A549 (cell line): ENCODE measurements at regions of chr10 and their contacts with region 1.

Region 1: GRCh38 chr10:70903262-70903921 is 15.0 kb upstream of the PCBD1 start:
- DNase-seq: peak; percentile 59 to 62
- ATAC-seq: peak; percentile 51 to 77
- H3K4me3 ChIP-seq: no peak overlapping the region
- H3K27ac ChIP-seq: no peak overlapping the region
- H3K4me1 ChIP-seq: 0 out of 3 replicates have a peak, but pooled peaks cover 3% of the 10 kb centered on the region
- CTCF ChIP-seq: peak; percentile 75
- EP300 ChIP-seq: no peak
- POLR2A ChIP-seq: no peak
- RAD21 ChIP-seq: peak; percentile 83 to 93

Region 2: GRCh38 chr10:70887804-70888800 is 15.3 kb before region 1 on chr10 and contains the start of gene PCBD1:
- CTCF ChIA-PET with region 1: interaction called, 31 read pairs
- POLR2A ChIA-PET with region 1: no interaction called
- DNase-seq: peak; percentile 77 to 81
- ATAC-seq: peak; percentile 92 to 93
- H3K4me3 ChIP-seq: peak within 1 kb of the TSS; percentile 87
- H3K27ac ChIP-seq: peak within 1 kb of the TSS; percentile 94 to 98
- H3K4me1 ChIP-seq: peaks cover 20% of the 10 kb centered on the region
- CTCF ChIP-seq: no peak
- EP300 ChIP-seq: no peak
- POLR2A ChIP-seq: peak; percentile 85
- RAD21 ChIP-seq: no peak
- polyA plus RNA-seq, gene PCBD1: 169 TPM in 2 replicates

Region 3: DNA sequence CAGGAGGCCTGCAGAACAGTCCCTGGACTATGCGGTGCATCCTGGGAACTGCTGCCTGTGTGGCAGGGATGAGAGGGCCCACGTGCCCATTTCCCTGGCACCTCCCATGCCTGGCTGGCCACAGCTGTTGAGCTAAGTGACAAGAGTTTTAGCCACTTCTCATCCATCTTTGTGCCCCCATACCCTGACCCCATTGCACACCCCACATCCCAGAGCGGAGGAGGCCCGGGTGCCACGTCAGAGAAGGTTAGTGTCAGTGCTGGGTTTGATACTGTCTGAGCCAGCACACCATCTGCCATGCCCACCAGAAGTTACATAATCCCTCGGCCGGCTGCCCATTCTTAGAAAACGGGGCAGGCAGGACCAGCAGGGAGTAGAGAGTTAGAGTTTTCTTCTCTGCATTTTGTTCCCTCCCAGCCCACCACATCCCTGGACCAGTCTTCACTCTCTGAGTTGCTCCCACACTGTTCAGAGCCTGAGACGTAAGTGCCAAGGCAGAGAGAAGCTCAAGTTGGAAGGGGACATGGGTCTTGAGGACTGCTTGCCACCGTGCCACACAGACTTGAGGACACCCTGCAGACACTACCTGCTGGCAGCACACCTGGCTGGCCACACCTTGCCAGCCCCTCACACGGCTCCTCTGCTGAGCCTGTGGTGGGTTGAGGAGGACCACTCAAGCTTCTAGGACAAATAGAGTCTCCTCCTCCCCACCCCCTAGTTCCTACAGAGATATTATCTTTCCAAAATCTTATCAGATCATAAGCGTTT is 322.1 kb after region 1 on chr10:
- CTCF ChIA-PET with region 1: interaction called, 11 read pairs
- POLR2A ChIA-PET with region 1: no interaction called
- DNase-seq: no peak
- ATAC-seq: no peak
- H3K4me3 ChIP-seq: no peak overlapping the region
- H3K27ac ChIP-seq: no peak overlapping the region
- H3K4me1 ChIP-seq: no peaks in the 10 kb centered on the region
- CTCF ChIP-seq: no peak
- EP300 ChIP-seq: no peak
- POLR2A ChIP-seq: no peak
- RAD21 ChIP-seq: no peak

Region 4: DNA sequence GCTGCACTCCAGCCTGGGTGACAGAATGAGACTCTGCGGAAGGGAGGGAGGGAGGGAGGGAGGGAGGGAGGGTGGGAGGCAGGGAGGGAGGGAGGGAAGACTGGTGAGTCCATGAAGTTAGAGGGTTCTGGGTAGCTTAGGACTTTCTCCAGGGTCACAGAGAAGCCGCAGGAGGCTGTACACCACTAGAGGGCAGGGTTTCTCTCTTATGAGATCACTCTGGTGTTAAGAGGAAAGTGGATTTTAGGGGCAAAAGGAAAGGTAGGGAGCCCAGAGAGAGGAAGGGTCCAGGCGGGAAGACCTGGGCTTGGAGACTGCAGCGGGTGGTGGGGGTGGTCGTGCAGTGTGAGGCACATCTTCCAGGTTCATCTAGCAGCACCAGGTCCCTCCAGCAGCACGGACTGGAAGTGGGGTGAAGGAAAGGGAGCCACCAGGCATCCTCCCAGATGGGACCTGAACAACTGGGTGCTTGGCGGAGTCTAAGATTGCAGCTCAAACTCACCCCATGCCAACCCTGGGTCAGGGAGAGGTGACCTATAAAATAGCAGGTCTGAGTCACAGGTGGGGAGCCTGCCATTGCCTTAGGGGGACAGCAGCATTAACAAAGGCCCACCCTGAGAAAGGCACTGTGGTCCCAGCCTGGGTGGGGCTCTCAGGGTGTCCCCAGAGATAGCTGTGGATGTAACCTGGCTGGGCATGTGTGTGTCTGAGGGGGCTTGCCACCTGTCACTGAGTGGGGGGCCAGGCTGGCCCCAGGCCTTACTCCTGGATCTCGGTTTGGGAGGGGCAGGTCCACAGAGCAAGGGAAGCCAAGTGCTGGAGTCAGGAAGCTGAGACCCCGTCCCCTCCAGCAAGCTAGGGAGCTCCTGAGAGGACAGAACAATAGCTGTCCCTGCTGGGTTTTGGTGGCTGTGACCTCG is 367.2 kb after region 1 on chr10:
- CTCF ChIA-PET with region 1: interaction called, 362 read pairs
- POLR2A ChIA-PET with region 1: no interaction called
- DNase-seq: peak; percentile 72 to 91
- ATAC-seq: peak; percentile 80 to 90
- H3K4me3 ChIP-seq: no peak overlapping the region
- H3K27ac ChIP-seq: no peak overlapping the region
- H3K4me1 ChIP-seq: peaks cover 17% of the 10 kb centered on the region; the same call in 2 of the 3 replicates
- CTCF ChIP-seq: peak; percentile 62
- EP300 ChIP-seq: no peak
- POLR2A ChIP-seq: no peak
- RAD21 ChIP-seq: peak; percentile 32 to 45; a peak in 4 of 5 replicates

Region 5: DNA sequence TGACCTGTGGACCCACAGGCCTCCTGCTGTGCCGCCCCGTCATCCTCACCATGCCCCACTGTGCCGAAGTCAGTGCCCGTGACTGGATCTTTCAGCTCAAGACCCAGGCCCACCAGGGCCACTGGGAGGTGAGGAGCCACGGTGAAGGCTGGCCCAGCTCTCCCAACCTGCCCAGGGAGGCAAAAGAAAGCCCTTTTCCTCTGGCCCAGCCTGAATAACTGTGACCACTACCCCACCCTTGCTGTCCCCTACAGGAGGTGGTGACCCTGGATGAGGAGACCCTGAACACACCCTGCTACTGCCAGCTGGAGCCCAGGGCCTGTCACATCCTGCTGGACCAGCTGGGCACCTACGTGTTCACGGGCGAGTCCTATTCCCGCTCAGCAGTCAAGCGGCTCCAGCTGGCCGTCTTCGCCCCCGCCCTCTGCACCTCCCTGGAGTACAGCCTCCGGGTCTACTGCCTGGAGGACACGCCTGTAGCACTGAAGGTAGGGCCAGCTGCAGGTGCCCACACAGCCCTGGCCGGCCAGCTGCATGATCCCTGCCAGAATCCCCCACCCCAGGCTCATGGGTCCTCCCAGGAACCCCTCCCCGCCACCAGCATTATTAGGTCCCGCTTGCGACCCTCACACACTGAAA is 390.2 kb after region 1 on chr10:
- CTCF ChIA-PET with region 1: interaction called, 11 read pairs
- POLR2A ChIA-PET with region 1: no interaction called
- DNase-seq: no peak
- ATAC-seq: no peak
- H3K4me3 ChIP-seq: no peak overlapping the region
- H3K27ac ChIP-seq: no peak overlapping the region
- H3K4me1 ChIP-seq: no peaks in the 10 kb centered on the region
- CTCF ChIP-seq: no peak
- EP300 ChIP-seq: no peak
- POLR2A ChIP-seq: no peak
- RAD21 ChIP-seq: no peak